Right ventricle myocardium inferior (tissue), 1 donor: ENCODE measurements at regions of chr22 and their contacts with region 1.

Region 1: DNA sequence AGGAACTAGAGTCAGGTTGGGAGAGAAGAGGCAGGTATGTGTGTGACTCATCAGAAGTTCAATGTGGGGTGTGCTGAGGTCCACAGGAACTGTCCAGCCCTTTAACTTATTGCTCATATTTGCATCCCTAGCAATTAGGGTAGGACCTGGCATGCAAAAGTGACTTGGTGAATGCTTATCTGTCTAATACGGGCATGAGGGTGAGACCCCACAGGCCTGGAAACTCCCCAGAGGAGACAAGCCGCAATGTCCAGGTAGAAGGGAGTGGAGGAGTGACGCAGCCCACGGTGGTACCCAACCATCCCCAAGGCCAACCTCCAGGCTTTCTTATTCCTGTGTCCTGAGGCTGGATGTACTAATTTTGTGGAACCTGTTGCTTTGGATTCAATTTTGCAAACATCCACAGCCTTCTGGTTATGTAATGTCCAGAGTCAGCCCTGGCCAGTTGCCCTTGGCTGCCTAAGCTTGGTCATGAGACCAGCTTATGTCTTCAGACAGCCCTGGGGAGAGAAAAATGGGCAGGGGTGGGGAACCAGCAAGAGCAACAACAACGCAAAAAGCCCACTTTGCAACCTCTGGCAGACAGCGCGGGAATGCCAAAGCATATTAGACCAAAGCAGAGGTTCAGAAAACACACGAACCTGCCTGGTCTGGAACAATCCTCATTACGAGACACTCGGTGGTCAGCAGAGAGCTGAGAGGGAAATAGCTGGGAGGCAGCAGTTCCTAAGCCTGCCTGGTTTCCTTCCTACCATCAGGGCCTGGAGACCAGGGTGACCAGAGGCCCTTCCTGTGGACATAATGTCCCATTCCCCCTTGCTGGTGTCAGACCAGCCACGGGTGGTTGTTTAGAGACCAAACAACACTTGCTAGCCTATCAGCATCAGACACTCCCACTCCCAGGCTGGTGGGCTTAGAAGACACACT is 49.3 kb downstream of the TIMP3 start:
- DNase-seq: peak; percentile 90
- ATAC-seq: peak; percentile 47

Region 2: DNA sequence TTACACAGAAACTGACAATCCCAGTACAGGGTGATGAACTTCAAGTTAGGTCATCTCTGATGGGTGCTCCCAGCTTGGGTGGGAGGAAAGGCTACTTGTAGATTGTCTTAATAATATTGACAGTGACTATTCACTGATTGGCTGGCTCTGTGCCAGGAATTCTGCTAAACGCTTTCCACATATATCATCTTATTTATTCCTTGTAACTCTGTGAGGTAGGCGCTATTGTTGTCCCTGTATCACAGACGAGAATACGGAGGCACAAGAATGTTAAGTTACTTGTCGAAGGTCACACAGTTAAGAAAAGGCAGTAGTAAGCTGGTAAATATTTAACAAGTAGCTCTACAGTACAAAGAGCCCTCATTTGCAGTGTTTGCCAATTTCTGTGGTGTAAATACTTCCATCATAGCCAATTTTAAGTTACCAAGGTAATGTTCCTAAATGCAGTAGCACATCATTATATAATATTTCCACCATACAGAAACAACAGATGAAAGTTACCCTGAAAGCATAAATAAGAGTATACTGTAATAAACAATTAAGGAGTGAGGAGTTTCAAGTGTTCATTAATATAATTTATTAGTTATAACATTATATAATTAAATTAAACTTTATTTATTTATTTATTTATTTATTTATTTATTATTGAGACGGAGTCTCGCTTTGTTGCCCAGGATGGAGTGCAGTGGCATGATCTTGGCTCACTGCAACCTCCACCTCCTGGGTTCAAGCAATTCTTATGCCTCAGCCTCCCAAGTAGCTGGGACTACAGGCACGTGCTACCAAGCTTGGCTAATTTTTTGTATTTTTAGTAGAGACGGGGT is 60.8 kb before region 1 on chr22:
- intact Hi-C with region 1: no loop called
- DNase-seq: no peak
- ATAC-seq: no peak

Region 3: GRCh38 chr22:32803755-32804435 is 47.0 kb before region 1 on chr22:
- intact Hi-C with region 1: loop called (anchors 2 kb)
- DNase-seq: no peak
- ATAC-seq: no peak

Region 4: DNA sequence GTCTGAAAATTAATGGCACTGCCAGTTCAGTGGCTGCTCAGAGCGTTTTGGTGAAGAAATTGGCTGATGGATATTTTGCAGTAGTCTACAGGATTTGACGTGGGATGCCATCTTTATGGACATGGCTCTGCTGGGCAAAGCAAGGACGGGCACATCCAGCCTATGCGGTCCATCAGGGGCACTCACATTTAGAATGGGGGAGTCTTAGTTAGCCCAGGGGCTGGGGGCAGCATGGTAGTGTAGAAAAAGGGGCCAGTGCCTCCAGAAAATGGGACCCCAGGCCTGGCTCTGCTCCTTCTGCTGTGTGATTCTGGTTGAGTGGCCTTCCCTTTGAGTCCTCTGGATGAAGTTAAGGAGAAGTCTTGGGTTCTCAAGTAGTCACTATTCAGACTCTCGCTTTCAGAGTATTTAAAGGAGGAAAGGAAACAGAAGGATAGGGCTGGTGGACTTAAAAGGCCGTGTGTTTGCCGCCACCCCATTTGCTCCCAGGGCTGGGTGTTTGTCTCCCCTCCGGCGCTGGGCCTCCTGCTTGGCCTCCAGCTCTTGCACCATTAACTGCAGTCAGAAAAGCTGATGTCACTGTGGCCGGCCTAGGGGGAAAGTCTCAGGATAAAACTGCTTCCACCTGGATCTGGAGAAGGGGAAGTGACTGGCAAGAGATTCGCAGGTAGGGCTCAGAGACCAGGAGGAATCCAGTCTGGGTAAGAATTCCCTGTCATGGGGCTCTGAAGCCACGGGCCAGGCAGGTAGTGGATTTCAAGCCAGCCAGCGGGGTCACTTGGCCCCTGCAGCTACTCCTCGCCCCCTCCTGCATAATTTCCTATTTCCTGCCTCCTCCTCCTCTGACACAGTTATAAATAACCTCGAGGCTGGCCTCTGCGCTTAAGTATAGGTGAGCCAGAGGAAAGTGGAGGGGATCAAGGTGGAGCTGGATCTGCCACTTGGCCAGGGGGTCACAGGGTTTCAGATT is 32.4 kb before region 1 on chr22:
- intact Hi-C with region 1: loop called (anchors 5 kb)
- DNase-seq: no peak
- ATAC-seq: no peak

Region 5: GRCh38 chr22:32887324-32887980 is 36.6 kb after region 1 on chr22:
- intact Hi-C with region 1: loop called (anchors 5 kb)
- DNase-seq: no peak
- ATAC-seq: no peak